PC-3 (cell line): ENCODE measurements at regions of chr17 and their contacts with region 1.

Region 1: DNA sequence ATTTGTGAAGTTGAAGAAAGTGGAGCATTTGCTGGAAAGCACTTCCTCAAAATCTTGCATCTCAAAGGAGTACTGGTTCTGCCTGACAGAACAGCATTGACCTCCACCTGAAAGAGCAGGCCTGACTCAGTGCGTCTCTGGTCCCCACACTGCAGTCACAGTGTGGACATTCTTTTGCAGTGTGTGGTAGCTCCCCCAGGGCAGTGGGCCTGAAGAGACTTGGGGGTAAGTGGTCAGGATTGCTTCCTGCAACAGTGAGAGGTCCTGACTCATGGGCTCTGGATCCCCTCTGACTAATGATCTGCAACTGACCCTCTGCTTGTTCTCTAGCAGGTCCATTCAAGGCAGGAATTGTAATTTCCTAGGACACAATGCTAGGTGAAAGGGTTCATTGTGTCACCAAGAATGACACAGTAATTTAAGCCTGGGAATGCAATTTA is 204.9 kb upstream of the KCNJ16 start:
- DNase-seq: peak; percentile 95
- ATAC-seq: peak; percentile 69
- H3K4me3 ChIP-seq: no peak overlapping the region
- H3K27ac ChIP-seq: peak overlapping the region; percentile 66
- H3K4me1 ChIP-seq: peaks cover 40% of the 10 kb centered on the region
- H3K27me3 ChIP-seq: no peaks in the 10 kb centered on the region
- CTCF ChIP-seq: no peak

Region 2: DNA sequence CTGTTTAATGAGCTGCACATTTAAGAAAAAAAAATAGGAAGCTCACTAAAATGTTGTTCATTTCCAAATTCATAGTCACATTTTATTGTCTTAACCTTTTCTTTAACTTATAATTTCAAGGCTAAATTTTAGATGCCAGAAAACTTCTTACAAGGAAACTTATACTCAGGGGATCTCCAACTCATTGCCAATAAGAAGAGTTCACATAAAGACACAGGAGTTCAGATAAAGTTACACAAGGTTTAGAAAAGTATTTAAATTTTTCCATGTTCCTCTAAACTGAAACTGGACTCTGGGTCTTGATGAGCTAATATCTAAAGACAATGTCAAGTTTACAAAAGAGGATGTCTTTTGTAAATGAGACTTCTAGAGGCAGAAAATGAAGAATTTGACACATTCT is 14.2 kb after region 1 on chr17:
- CTCF ChIA-PET with region 1: no interaction called
- POLR2A ChIA-PET with region 1: interaction called, 25 read pairs
- intact Hi-C with region 1: no loop called
- DNase-seq: no peak
- ATAC-seq: no peak
- H3K4me3 ChIP-seq: no peak overlapping the region
- H3K27ac ChIP-seq: no peak overlapping the region
- H3K4me1 ChIP-seq: no peaks in the 10 kb centered on the region
- H3K27me3 ChIP-seq: no peaks in the 10 kb centered on the region
- CTCF ChIP-seq: no peak